Activated CD4-positive, alpha-beta memory T cell treated with anti-CD3 and anti-CD28 coated beads for 36 hours (primary cell): ENCODE measurements at regions of chr7 and their contacts with region 1.

Region 1: GRCh38 chr7:102279537-102280400 is 6.9 kb upstream of the SH2B2 start:
- DNase-seq: peak; percentile 72
- H3K4me3 Mint-ChIP-seq: no peak overlapping the region
- H3K27ac Mint-ChIP-seq: no peak overlapping the region
- H3K4me1 Mint-ChIP-seq: peaks cover 10% of the 10 kb centered on the region
- H3K27me3 Mint-ChIP-seq: peaks cover under 1% of the 10 kb centered on the region

Region 2: DNA sequence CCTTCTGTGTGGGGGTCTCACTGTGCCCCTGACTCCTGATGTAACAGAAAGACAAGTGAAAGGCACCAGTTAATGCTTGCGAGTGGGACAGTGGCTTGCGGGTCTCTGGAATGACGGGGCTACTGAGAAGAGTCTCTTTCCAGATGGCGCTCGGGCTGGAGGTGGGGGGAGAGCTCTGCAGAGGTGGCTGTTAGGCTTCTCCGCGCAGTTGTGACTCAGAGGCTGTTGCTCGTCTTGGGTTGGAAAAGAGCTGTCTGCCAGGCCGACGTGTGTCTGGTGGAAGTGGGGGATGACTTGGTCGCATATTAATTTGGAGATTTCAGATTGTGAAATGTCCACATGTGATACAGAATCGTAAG is 21.0 kb before region 1 on chr7:
- CTCF ChIA-PET with region 1: no interaction called
- POLR2A ChIA-PET with region 1: no interaction called
- intact Hi-C with region 1: no loop called
- DNase-seq: no peak
- H3K4me3 Mint-ChIP-seq: no peak overlapping the region
- H3K27ac Mint-ChIP-seq: no peak overlapping the region
- H3K4me1 Mint-ChIP-seq: no peaks in the 10 kb centered on the region
- H3K27me3 Mint-ChIP-seq: no peaks in the 10 kb centered on the region

Region 3: GRCh38 chr7:102390697-102391484 is 111.1 kb after region 1 on chr7:
- CTCF ChIA-PET with region 1: interaction called, 50 read pairs
- POLR2A ChIA-PET with region 1: no interaction called
- intact Hi-C with region 1: loop called (anchors 1 kb)
- DNase-seq: peak; percentile 78
- H3K4me3 Mint-ChIP-seq: no peak overlapping the region
- H3K27ac Mint-ChIP-seq: no peak overlapping the region
- H3K4me1 Mint-ChIP-seq: peaks cover 5% of the 10 kb centered on the region
- H3K27me3 Mint-ChIP-seq: no peaks in the 10 kb centered on the region